Left ventricle myocardium superior (tissue), 1 donor: ENCODE measurements at regions of chr17 and their contacts with region 1.

Region 1: DNA sequence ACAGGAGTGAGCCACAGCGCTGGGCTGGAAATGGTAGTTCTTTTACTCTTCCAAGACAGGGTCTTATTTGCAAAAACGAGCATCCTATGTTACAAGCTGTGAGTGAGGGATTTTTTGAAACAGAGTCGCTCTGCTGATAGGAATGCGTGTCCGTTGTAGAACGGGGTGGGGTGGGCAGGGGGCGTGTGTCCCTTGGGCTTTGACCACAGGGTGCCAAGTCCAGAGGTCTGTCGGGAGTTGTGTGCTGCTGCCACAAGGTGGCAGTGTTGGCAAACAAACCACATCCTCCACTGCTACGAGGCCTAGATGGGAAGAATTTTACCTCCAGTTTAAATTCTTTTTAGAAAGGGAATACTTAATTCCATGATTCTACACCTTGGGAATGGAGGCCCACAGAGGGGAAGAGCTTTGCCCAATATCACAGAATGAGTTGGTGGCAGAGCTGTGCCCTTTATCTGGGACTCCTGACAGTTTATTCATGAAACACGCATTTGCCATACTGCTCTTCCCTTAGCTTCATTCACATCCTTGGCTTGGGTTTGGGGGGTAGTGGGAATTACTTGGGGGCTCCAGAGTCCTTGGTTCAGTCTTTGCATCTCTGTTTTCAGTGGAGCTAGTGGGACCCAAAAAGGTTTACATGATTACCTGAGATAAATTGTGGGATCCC is 30.6 kb upstream of the ETV4 start:
- DNase-seq: peak; percentile 72
- ATAC-seq: peak; percentile 81

Region 2: GRCh38 chr17:43528349-43528987 is 48.2 kb before region 1 on chr17:
- intact Hi-C with region 1: loop called (anchors 10 kb)
- DNase-seq: peak; percentile 69
- ATAC-seq: peak; percentile 48

Region 3: GRCh38 chr17:43676471-43676870 is 99.8 kb after region 1 on chr17:
- intact Hi-C with region 1: loop called (anchors 2 kb)
- DNase-seq: no peak
- ATAC-seq: no peak

Region 4: GRCh38 chr17:43940630-43941029 is 363.9 kb after region 1 on chr17:
- intact Hi-C with region 1: no loop called
- DNase-seq: peak; percentile 53
- ATAC-seq: peak; percentile 47